ENCODE measurements at regions of chr18 and their contacts with region 1.

Region 1: GRCh38 chr18:75679331-75679730 is 251.8 kb upstream of the SMIM21 start:
- DNase-seq: no peak
- H3K4me3 ChIP-seq: no peak overlapping the region
- H3K27ac ChIP-seq: no peak overlapping the region
- H3K4me1 ChIP-seq: no peaks in the 10 kb centered on the region
- H3K27me3 ChIP-seq: no peaks in the 10 kb centered on the region
- CTCF ChIP-seq: no peak
- EP300 ChIP-seq: no peak
- POLR2A ChIP-seq: no peak

Region 2: DNA sequence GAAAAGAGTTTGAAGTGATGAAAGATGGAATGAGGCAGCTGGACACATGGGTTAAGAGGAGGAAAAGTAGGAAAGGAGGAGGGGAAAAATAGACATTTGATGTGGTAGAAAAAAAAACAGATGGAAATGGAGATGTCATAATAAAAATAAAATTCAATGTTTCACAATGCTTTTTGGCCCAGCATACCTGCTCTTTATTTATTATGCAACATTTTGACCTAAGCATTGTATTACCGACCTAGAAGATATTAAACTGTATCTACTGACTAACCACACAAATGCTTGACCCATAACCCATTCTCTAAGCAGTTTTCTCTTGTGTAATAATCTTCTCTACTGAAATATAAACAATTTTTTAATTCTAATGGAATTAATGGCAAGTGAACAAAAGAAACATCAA is 1894.1 kb before region 1 on chr18:
- in situ Hi-C with region 1: no loop called
- intact Hi-C with region 1: loop called (anchors 5 kb)
- DNase-seq: no peak
- H3K4me3 ChIP-seq: no peak overlapping the region
- H3K27ac ChIP-seq: no peak overlapping the region
- H3K4me1 ChIP-seq: no peaks in the 10 kb centered on the region
- H3K27me3 ChIP-seq: no peaks in the 10 kb centered on the region
- CTCF ChIP-seq: no peak
- EP300 ChIP-seq: no peak
- POLR2A ChIP-seq: no peak

Region 3: DNA sequence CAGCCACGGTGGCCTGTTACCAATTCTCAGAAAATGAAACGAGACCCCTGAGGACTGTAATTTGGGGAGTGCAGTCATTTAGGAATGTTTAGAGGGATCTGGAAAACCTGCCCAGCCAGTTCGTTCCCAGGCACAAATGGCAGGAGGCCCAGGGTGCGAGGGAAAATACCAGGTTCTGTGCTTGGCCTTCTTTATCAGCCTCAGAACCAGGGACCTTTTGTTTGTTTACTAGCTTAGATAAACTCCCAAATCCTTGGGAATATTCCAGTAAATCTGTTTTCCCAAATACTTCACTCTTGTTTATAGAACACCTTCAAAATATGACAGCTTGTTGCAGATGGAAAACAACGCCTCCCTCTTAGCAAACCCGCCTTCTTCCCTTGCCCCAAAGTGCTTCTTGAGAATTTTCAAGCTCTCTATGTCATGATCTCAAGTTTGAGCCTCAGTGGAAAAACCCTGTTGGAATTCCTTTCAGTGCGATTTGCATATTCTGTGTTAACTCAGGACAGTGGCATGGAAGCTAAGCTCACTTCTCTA is 148.5 kb after region 1 on chr18:
- in situ Hi-C with region 1: no loop called
- intact Hi-C with region 1: no loop called
- DNase-seq: no peak
- H3K4me3 ChIP-seq: no peak overlapping the region
- H3K27ac ChIP-seq: peak overlapping the region; percentile 16 to 42 (median 29)
- H3K4me1 ChIP-seq: peaks cover 0 to 32% (median 0%) of the 10 kb centered on the region in 4 donors
- H3K27me3 ChIP-seq: no peaks in the 10 kb centered on the region
- CTCF ChIP-seq: no peak
- EP300 ChIP-seq: no peak
- POLR2A ChIP-seq: no peak